ENCODE measurements at regions of chr3 and their contacts with region 1.

Region 1: GRCh38 chr3:167406875-167407492 is 26.9 kb upstream of the ZBBX start:
- DNase-seq: peak in 1 of 2 experiments; percentile 31
- H3K4me3 ChIP-seq: no peak overlapping the region
- H3K27ac ChIP-seq: no peak overlapping the region
- H3K4me1 ChIP-seq: no peaks in the 10 kb centered on the region; a peak in 1 of 7 replicates
- H3K27me3 ChIP-seq: no peaks in the 10 kb centered on the region
- CTCF ChIP-seq: peak; percentile 24 to 87 (median 84)
- EP300 ChIP-seq: no peak
- POLR2A ChIP-seq: no peak
- RAD21 ChIP-seq: peak; percentile 91 to 94

Region 2: DNA sequence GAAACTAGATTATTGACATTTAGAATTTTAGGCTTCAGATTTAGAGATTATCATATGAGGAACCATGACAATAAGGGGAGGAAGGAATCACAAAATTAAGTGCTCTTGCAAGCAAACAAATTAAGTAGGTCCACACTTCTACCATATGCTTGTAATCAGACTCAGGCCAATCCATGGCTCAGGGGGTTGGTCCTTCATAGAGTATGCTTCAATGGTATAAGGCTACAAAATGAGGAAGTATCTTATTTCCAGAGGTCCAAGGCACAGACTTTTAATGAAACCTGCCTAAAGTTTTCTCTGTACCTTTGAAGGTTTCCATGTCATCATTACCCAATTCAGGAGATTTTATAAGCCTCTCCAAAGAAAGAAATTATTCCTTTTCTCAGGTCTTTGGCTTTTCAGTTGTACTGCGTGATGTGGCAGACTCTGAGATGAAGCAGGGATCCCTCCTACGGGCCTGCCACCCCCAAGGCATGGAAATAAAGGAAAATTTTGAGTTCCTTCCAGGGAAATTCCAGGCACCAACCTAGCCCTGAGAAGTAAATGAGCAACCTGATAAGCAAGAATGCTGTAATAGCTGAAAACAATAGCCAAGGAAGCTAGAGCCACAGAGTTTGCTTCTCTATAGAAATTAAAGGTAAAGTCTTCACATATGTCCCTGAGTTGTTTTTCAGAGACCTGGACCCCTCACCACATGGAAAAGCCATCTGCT is 30.6 kb after region 1 on chr3:
- CTCF ChIA-PET with region 1: no interaction called
- POLR2A ChIA-PET with region 1: no interaction called
- DNase-seq: no peak
- H3K4me3 ChIP-seq: no peak overlapping the region
- H3K27ac ChIP-seq: no peak overlapping the region
- H3K4me1 ChIP-seq: peaks cover 0 to 5% (median 2%) of the 10 kb centered on the region in 4 experiments; a peak in 2 of 7 replicates
- H3K27me3 ChIP-seq: no peaks in the 10 kb centered on the region
- CTCF ChIP-seq: no peak
- EP300 ChIP-seq: no peak
- POLR2A ChIP-seq: no peak
- RAD21 ChIP-seq: no peak

Region 3: DNA sequence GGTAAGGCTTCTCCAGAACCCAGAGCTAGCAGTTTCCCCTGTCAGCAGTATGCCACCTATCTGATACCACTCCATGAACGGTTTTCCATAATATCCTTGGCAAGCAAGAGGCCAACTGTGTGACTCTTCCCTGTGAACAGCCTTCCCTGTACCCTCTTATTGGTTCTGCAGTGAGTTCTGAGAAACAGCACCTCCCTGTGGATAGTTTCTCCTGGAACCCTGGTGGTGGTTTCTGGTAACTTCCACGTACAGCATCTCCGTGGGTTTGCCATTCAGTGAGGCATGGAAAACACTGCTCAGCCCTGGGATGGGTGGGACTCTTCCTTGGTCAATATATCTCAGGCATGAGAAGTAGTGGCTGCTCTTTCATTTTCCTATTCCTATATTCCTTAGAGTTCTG is 86.3 kb after region 1 on chr3:
- CTCF ChIA-PET with region 1: interaction called, 11 read pairs
- POLR2A ChIA-PET with region 1: no interaction called
- DNase-seq: peak in 1 of 2 experiments; percentile 65
- H3K4me3 ChIP-seq: no peak overlapping the region
- H3K27ac ChIP-seq: no peak overlapping the region
- H3K4me1 ChIP-seq: peaks cover 0 to 8% (median 6%) of the 10 kb centered on the region in 4 experiments; a peak in 5 of 7 replicates
- H3K27me3 ChIP-seq: no peaks in the 10 kb centered on the region
- CTCF ChIP-seq: peak; percentile 66 to 100 (median 94)
- EP300 ChIP-seq: no peak
- POLR2A ChIP-seq: no peak
- RAD21 ChIP-seq: peak; percentile 64 to 78

Region 4: GRCh38 chr3:167740961-167741587 is 334.1 kb after region 1 on chr3:
- CTCF ChIA-PET with region 1: interaction called, 18 read pairs
- POLR2A ChIA-PET with region 1: no interaction called
- DNase-seq: no peak
- H3K4me3 ChIP-seq: no peak overlapping the region
- H3K27ac ChIP-seq: no peak overlapping the region
- H3K4me1 ChIP-seq: no peaks in the 10 kb centered on the region
- H3K27me3 ChIP-seq: no peaks in the 10 kb centered on the region
- CTCF ChIP-seq: peak; percentile 46 to 71 (median 57)
- EP300 ChIP-seq: no peak
- POLR2A ChIP-seq: no peak
- RAD21 ChIP-seq: peak; percentile 74 to 76

Measured in H1 (cell line).